ENCODE measurements at regions of chr1 and their contacts with region 1.

Region 1: DNA sequence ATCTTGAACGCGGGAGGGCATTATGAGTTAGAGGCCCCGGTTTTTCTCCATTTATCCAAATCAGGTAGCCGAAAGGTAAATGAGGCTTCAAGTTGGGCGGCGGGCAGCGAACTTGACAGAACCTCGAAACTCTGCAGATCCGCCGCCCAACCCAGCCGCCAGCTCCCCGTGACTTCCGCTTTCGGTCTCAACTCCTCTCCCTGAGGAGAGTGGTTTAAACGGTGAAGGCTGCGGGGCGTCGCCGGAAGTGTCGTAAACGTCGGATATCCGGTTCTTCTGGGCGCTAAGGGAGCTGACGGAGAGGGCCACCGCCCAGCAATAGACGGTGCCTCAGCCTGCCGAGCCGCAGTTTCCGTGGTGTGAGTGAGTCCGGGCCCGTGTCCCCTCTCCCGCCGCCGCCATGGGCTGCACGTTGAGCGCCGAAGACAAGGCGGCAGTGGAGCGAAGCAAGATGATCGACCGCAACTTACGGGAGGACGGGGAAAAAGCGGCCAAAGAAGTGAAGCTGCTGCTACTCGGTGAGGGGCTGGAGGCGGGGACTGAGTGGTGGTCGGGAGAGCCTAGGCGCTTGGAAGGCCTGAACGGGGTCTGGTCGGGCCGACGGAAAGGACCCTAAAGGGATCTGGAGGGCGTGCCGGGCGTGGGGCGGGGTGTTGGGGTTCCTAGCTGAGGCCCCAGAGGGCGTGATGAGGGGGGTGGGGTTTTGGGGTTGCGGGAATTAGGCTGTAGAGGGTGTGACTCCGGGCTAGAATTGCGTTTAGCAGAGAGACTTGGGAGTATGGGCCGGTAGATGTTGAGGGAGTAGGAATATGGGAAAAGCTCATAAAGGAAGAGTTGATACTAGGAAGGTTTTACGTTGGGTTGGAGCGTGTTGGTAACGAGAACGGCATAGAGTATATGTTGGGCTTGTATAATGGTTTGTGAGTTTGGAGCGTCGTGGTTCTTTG is at the start of gene GNAI3:
- DNase-seq: peak; percentile 82 to 95
- H3K4me3 ChIP-seq: peak within 1 kb of the TSS; percentile 81 to 91 (median 90)
- H3K27ac ChIP-seq: peak within 1 kb of the TSS; percentile 83
- H3K4me1 ChIP-seq: peaks cover 0 to 8% (median under 1%) of the 10 kb centered on the region in 4 experiments; a peak in 5 of 7 replicates
- H3K27me3 ChIP-seq: no peaks in the 10 kb centered on the region
- CTCF ChIP-seq: peak in 1 of 3 experiments; percentile 1; a peak in 1 of 4 replicates
- EP300 ChIP-seq: no peak
- POLR2A ChIP-seq: peak; percentile 62 to 91
- RAD21 ChIP-seq: peak in 1 of 2 experiments; percentile 4; a peak in 1 of 4 replicates
- total RNA-seq, gene GNAI3: 9.2 and 9.8 TPM in 2 replicates

Region 2: GRCh38 chr1:109090196-109091077 is 458.2 kb before region 1 on chr1 and contains the start of gene TMEM167B:
- CTCF ChIA-PET with region 1: no interaction called
- POLR2A ChIA-PET with region 1: no interaction called
- DNase-seq: peak; percentile 78 to 89
- H3K4me3 ChIP-seq: peak within 1 kb of the TSS; percentile 63 to 87 (median 76)
- H3K27ac ChIP-seq: peak within 1 kb of the TSS; percentile 60
- H3K4me1 ChIP-seq: peaks cover 0 to 5% (median 0%) of the 10 kb centered on the region in 4 experiments; a peak in 2 of 7 replicates
- H3K27me3 ChIP-seq: no peaks in the 10 kb centered on the region
- CTCF ChIP-seq: no peak
- EP300 ChIP-seq: peak in 1 of 2 experiments; percentile 80; a peak in 1 of 3 replicates
- POLR2A ChIP-seq: peak in 1 of 2 experiments; percentile 74; a peak in 2 of 3 replicates
- RAD21 ChIP-seq: no peak
- total RNA-seq, gene TMEM167B: 14.2 and 14.8 TPM in 2 replicates

Region 3: DNA sequence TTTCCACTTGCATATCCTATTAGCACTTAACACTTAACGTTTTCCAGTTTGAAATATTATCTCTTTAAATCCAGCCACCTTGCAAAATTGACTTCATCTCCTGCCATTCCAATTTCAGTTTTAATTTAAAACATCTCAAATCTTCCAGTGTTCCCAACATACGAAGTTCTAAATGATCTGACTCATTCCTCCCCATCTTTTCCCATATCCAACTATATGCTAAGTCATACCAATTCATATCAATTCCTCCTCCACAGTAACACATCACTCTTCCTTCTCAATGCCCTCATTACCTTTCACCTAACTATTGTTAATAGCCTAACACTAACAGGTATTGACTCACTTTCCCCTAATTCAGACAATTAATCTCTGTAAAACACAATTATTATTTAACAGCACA is 125.1 kb before region 1 on chr1:
- CTCF ChIA-PET with region 1: no interaction called
- POLR2A ChIA-PET with region 1: no interaction called
- DNase-seq: no peak
- H3K4me3 ChIP-seq: no peak overlapping the region
- H3K27ac ChIP-seq: no peak overlapping the region
- H3K4me1 ChIP-seq: no peaks in the 10 kb centered on the region; a peak in 1 of 7 replicates
- H3K27me3 ChIP-seq: no peaks in the 10 kb centered on the region
- CTCF ChIP-seq: no peak
- EP300 ChIP-seq: no peak
- POLR2A ChIP-seq: no peak
- RAD21 ChIP-seq: no peak

Region 4: DNA sequence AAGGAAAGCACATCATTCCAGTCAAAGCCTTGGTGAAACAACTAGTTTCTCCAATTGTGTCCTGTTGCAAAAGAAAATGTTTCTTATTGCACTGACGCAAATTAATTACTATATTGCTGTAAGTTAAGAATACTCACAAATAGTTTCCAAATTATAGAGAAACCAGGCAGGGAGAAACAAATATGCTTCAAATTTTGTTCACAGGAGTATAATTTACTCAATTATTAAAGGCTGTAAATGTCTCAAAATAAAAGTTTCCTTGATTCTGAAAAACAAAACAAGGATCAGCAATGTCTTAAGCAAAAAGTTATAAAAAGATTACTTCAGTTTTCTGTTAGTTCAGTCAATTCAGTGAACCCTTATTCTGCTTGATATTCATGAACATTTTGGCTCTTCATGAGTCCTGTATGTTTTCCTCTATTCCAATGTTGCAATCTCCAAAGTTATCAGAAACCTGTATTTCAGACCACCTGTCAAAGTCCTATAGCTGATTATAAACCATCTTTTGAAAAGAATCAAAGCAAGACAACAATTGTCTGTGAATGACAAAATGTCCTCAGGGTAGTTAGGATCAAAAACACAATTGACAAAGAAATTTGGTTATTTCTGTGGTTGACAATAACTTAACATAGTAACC is 94.0 kb before region 1 on chr1:
- CTCF ChIA-PET with region 1: no interaction called
- POLR2A ChIA-PET with region 1: no interaction called
- DNase-seq: no peak
- H3K4me3 ChIP-seq: no peak overlapping the region
- H3K27ac ChIP-seq: no peak overlapping the region
- H3K4me1 ChIP-seq: no peaks in the 10 kb centered on the region
- H3K27me3 ChIP-seq: no peaks in the 10 kb centered on the region
- CTCF ChIP-seq: no peak
- EP300 ChIP-seq: no peak
- POLR2A ChIP-seq: no peak
- RAD21 ChIP-seq: no peak

Region 5: DNA sequence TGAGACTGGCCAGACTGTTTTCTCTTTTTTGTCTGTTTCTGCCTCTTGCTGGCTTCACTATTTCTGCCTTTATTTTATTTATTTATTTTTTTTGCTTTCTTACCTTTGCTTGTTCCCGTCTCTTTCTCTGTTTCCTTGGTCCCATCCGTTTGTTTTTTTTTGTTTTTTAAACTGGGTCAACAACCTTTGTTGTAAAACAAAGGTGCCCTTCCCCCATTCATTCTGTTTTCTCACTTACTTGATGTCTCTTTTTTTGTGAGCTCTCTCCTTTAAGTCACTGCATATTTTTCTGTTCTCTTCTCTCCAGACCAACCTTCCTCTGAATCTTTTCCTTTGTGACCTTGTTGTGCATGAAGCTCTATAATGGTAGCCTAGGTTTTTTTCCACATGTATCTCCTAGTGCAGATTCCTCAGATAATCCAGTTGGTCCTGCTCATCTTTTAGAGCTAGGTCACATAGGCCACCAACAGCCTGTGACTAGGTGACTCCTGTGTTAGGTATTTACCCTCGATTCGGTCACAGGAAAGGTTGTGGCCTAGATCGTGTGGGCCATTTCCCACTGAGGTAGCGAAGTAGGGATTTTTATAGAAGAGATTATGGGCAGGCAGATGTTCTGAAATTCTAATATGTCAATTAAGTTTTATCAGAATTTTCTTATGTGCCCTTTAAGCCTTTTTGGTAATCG is 15.7 kb after region 1 on chr1:
- CTCF ChIA-PET with region 1: interaction called, 14 read pairs
- POLR2A ChIA-PET with region 1: interaction called, 13 read pairs
- DNase-seq: no peak
- H3K4me3 ChIP-seq: peak overlapping the region in 3 of 4 experiments; percentile 2 to 30 (median 6); a peak in 3 of 8 replicates
- H3K27ac ChIP-seq: peak overlapping the region; percentile 59
- H3K4me1 ChIP-seq: peaks cover 0 to 23% (median 7%) of the 10 kb centered on the region in 4 experiments; a peak in 6 of 7 replicates
- H3K27me3 ChIP-seq: no peaks in the 10 kb centered on the region
- CTCF ChIP-seq: no peak
- EP300 ChIP-seq: no peak
- POLR2A ChIP-seq: peak in 1 of 2 experiments; percentile 36; a peak in 1 of 3 replicates
- RAD21 ChIP-seq: no peak

Region 6: GRCh38 chr1:109598655-109599054 is 50.1 kb after region 1 on chr1:
- CTCF ChIA-PET with region 1: interaction called, 15 read pairs
- POLR2A ChIA-PET with region 1: interaction called, 12 read pairs
- DNase-seq: no peak
- H3K4me3 ChIP-seq: no peak overlapping the region
- H3K27ac ChIP-seq: no peak overlapping the region
- H3K4me1 ChIP-seq: no peaks in the 10 kb centered on the region
- H3K27me3 ChIP-seq: no peaks in the 10 kb centered on the region
- CTCF ChIP-seq: peak; percentile 36 to 64 (median 61)
- EP300 ChIP-seq: no peak
- POLR2A ChIP-seq: no peak
- RAD21 ChIP-seq: peak; percentile 57 to 67

Region 7: DNA sequence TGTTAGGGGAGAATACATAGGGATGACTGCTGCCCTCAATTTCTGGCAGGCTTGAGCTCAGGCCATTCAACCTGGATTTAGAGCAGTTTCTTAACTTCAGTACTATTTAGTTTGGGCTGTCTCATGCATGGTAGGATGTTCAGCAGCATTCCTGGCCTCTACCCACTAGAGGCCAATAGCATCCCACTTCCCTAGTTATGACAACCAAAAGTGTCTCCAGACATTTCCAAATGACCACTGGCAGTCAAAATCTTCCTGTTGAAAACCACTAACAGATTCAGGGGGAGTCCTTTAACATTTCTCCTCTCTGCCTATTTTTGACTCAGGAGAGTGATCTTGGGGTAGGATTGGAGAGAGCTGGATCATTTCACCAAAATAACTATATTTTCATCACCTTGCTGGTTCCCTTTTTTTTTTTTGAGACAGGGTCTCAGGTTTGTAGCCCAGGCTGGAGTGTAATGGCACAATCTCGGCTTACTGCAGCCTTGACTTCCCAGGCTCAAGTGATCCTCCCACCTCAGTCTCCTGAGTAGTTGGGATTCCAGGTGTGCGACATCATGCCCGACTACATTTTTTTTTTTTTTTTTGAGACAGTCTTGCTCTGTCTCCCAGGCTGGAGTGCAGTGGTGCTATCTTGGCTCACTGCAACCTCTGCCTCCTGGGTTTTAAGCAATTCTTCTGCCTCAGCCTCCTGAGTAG is 62.2 kb after region 1 on chr1:
- CTCF ChIA-PET with region 1: interaction called, 18 read pairs
- POLR2A ChIA-PET with region 1: interaction called, 6 read pairs
- DNase-seq: no peak
- H3K4me3 ChIP-seq: no peak overlapping the region
- H3K27ac ChIP-seq: no peak overlapping the region
- H3K4me1 ChIP-seq: no peaks in the 10 kb centered on the region
- H3K27me3 ChIP-seq: no peaks in the 10 kb centered on the region
- CTCF ChIP-seq: no peak
- EP300 ChIP-seq: no peak
- POLR2A ChIP-seq: no peak
- RAD21 ChIP-seq: no peak

Region 8: GRCh38 chr1:109620841-109621286 is 72.3 kb after region 1 on chr1:
- CTCF ChIA-PET with region 1: interaction called, 72 read pairs
- POLR2A ChIA-PET with region 1: interaction called, 18 read pairs
- DNase-seq: peak in 1 of 2 experiments; percentile 89
- H3K4me3 ChIP-seq: peak overlapping the region; percentile 69 to 85 (median 78)
- H3K27ac ChIP-seq: no peak overlapping the region
- H3K4me1 ChIP-seq: peaks cover 4 to 25% (median 12%) of the 10 kb centered on the region in 4 experiments
- H3K27me3 ChIP-seq: no peaks in the 10 kb centered on the region
- CTCF ChIP-seq: no peak
- EP300 ChIP-seq: no peak
- POLR2A ChIP-seq: no peak
- RAD21 ChIP-seq: no peak

Region 9: DNA sequence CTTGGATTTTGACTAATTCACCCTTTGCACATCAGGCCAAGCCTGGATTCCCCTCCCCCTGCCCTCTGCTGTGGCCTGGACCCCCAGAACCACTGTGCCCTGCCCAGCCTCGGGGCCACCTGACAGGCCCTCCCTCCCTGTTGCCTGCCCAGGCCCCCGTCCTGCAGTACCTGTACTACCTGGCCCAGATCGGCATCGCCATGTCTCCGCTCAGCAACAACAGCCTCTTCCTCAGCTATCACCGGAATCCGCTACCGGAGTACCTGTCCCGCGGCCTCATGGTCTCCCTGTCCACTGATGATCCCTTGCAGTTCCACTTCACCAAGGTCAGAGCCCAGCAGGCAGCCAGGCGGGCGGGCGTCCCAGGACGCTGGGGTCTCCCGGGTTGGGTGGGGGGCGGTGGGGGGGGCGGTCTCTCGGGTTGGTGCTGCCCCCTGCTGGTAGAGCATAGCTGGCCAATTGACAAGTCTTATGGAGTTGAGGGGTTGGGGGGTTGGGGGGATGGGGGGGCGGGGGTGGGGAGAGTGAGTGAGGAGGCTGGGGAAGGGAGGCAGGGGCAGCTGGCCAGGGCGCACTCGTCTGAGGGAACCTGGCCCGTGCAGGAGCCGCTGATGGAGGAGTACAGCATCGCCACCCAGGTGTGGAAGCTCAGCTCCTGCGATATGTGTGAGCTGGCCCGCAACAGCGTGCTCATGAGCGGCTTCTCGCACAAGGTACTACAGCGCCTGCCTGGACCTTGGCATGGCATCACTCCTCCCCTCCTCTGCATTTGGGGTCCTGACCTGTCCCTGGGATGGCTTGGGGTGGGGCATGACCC is 81.7 kb after region 1 on chr1:
- CTCF ChIA-PET with region 1: interaction called, 72 read pairs
- POLR2A ChIA-PET with region 1: interaction called, 16 read pairs
- DNase-seq: peak in 1 of 2 experiments; percentile 69
- H3K4me3 ChIP-seq: no peak overlapping the region
- H3K27ac ChIP-seq: no peak overlapping the region
- H3K4me1 ChIP-seq: peaks cover 0 to 2% (median 0%) of the 10 kb centered on the region in 4 experiments; a peak in 2 of 7 replicates
- H3K27me3 ChIP-seq: no peaks in the 10 kb centered on the region
- CTCF ChIP-seq: no peak
- EP300 ChIP-seq: no peak
- POLR2A ChIP-seq: no peak
- RAD21 ChIP-seq: no peak; a peak in 1 of 4 replicates

Region 10: GRCh38 chr1:109636201-109636952 is 87.8 kb after region 1 on chr1:
- CTCF ChIA-PET with region 1: interaction called, 72 read pairs
- POLR2A ChIA-PET with region 1: interaction called, 18 read pairs
- DNase-seq: peak in 1 of 2 experiments; percentile 53
- H3K4me3 ChIP-seq: no peak overlapping the region; a peak in 1 of 8 replicates
- H3K27ac ChIP-seq: no peak overlapping the region
- H3K4me1 ChIP-seq: peaks cover 5 to 8% (median 6%) of the 10 kb centered on the region in 4 experiments; a peak in 6 of 7 replicates
- H3K27me3 ChIP-seq: no peaks in the 10 kb centered on the region; a peak in 1 of 7 replicates
- CTCF ChIP-seq: no peak
- EP300 ChIP-seq: no peak
- POLR2A ChIP-seq: no peak
- RAD21 ChIP-seq: no peak

Measured in H1 (cell line).